CD4-positive, alpha-beta T cell (primary cell): ENCODE measurements at regions of chr10 and their contacts with region 1.

Region 1: DNA sequence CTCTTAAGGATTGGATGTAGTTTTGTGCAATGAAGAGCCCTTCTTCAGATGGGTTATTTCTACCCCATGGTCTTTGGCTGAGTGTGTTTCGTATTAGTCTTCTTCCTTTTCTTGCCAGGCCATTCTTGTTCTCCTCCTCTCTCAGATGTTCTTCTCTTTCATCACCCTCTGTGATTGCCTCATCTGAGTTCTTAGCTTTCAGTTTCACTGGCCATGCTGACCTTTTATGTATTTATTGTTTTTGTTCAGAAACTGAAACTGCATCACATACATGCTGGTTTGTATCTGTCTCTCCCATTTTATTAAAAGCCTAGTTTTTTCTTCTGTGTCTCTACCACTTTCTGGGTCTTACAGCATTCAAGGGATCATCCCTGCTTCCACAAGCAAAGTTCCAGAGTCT is 21.7 kb upstream of the PCGF5 start:
- DNase-seq: peak in 3 of 14 experiments; percentile 58 to 81 (median 61)
- ATAC-seq: peak; percentile 24
- H3K4me3 ChIP-seq: no peak overlapping the region
- H3K4me3 Mint-ChIP-seq: peak overlapping the region; percentile 6
- H3K27ac ChIP-seq: peak overlapping the region in 1 of 2 donors; percentile 71
- H3K27ac Mint-ChIP-seq: peak overlapping the region; percentile 74
- H3K4me1 ChIP-seq: peaks cover 43% of the 10 kb centered on the region
- H3K4me1 Mint-ChIP-seq: peaks cover 84% of the 10 kb centered on the region
- H3K27me3 ChIP-seq: no peaks in the 10 kb centered on the region
- H3K27me3 Mint-ChIP-seq: no peaks in the 10 kb centered on the region
- CTCF ChIP-seq: no peak

Region 2: GRCh38 chr10:90862908-90863514 is 335.8 kb before region 1 on chr10:
- CTCF ChIA-PET with region 1: no interaction called
- POLR2A ChIA-PET with region 1: no interaction called
- intact Hi-C with region 1: no loop called
- DNase-seq: peak in 3 of 14 experiments; percentile 13 to 47 (median 45)
- ATAC-seq: peak; percentile 48
- H3K4me3 ChIP-seq: no peak overlapping the region
- H3K4me3 Mint-ChIP-seq: no peak overlapping the region
- H3K27ac ChIP-seq: no peak overlapping the region
- H3K27ac Mint-ChIP-seq: no peak overlapping the region
- H3K4me1 ChIP-seq: peaks cover 5% of the 10 kb centered on the region
- H3K4me1 Mint-ChIP-seq: no peaks in the 10 kb centered on the region
- H3K27me3 ChIP-seq: peaks cover 5 to 27% of the 10 kb centered on the region in 2 experiments
- H3K27me3 Mint-ChIP-seq: peaks cover 88% of the 10 kb centered on the region
- CTCF ChIP-seq: peak; percentile 75

Region 3: DNA sequence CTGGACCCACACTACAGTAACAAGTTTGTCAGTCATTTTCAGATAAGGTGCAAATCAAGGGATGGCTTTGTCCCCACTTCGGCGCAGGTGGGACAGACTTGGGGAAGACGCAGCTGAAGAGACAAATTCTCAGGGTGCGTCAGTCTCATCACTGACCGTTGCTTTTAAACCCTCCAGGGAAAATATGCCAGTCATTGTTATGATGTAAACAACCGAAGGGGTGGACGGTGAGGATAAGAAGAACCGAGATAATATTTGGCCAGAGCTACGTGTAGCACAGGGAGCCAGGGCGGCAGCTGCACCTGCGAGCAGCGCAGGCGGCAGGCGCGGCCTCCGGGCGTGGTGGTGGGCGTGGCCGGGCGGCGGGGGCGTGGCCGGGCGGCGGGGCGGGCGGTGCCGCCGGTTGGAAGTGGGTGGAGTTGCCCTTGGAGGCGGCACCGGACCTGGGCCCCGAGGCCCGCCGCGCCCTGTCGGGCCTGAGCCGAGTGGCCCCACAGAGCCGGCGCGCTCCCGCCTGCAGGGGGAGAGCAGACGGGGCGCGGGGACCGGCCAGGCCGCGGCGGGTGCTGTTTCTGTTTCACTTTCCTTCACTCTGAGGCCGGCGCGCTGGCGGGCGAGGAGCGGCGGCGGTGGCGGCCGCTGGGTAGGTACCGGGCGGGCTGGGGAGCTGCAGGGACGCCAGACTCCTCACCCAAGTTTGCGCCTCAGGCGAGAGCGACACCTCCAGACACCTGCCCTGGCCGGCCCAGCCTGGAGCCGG is 21.6 kb after region 1 on chr10 and contains the start of gene PCGF5:
- CTCF ChIA-PET with region 1: interaction called, 3 read pairs
- POLR2A ChIA-PET with region 1: interaction called, 15 read pairs
- intact Hi-C with region 1: loop called in 1 of 2 experiments (anchors 2 kb)
- DNase-seq: peak; percentile 81 to 96 (median 91)
- ATAC-seq: peak; percentile 94
- H3K4me3 ChIP-seq: peak within 1 kb of the TSS; percentile 59
- H3K4me3 Mint-ChIP-seq: peak within 1 kb of the TSS; percentile 89
- H3K27ac ChIP-seq: peak within 1 kb of the TSS in 1 of 2 donors; percentile 65
- H3K27ac Mint-ChIP-seq: peak within 1 kb of the TSS; percentile 84
- H3K4me1 ChIP-seq: peaks cover 21% of the 10 kb centered on the region
- H3K4me1 Mint-ChIP-seq: peaks cover 44% of the 10 kb centered on the region
- H3K27me3 ChIP-seq: no peaks in the 10 kb centered on the region
- H3K27me3 Mint-ChIP-seq: no peaks in the 10 kb centered on the region
- CTCF ChIP-seq: no peak
- total RNA-seq, gene PCGF5: 57.7 to 58.4 TPM